Common myeloid progenitor, CD34-positive (primary cell): ENCODE measurements at regions of chr3 and their contacts with region 1.

Region 1: GRCh38 chr3:136690599-136690998 is 61.6 kb downstream of the STAG1 start:
- DNase-seq: peak in 2 of 3 donors; percentile 31 to 63
- H3K4me3 ChIP-seq: no peak overlapping the region
- H3K27ac ChIP-seq: no peak overlapping the region
- H3K4me1 ChIP-seq: peaks cover 0 to 3% (median 0%) of the 10 kb centered on the region in 4 experiments
- H3K27me3 ChIP-seq: no peaks in the 10 kb centered on the region

Region 2: GRCh38 chr3:136703429-136703828 is 12.8 kb after region 1 on chr3:
- CTCF ChIA-PET with region 1: interaction called, 15 read pairs
- POLR2A ChIA-PET with region 1: no interaction called
- DNase-seq: peak in 1 of 3 donors; percentile 50
- H3K4me3 ChIP-seq: no peak overlapping the region
- H3K27ac ChIP-seq: no peak overlapping the region
- H3K4me1 ChIP-seq: no peaks in the 10 kb centered on the region
- H3K27me3 ChIP-seq: no peaks in the 10 kb centered on the region

Region 3: GRCh38 chr3:136728918-136729317 is 38.3 kb after region 1 on chr3:
- CTCF ChIA-PET with region 1: no interaction called
- POLR2A ChIA-PET with region 1: no interaction called
- DNase-seq: no peak
- H3K4me3 ChIP-seq: peak overlapping the region in 1 of 7 experiments; percentile 23
- H3K27ac ChIP-seq: no peak overlapping the region
- H3K4me1 ChIP-seq: peaks cover 7 to 30% (median 20%) of the 10 kb centered on the region in 4 experiments
- H3K27me3 ChIP-seq: no peaks in the 10 kb centered on the region

Region 4: DNA sequence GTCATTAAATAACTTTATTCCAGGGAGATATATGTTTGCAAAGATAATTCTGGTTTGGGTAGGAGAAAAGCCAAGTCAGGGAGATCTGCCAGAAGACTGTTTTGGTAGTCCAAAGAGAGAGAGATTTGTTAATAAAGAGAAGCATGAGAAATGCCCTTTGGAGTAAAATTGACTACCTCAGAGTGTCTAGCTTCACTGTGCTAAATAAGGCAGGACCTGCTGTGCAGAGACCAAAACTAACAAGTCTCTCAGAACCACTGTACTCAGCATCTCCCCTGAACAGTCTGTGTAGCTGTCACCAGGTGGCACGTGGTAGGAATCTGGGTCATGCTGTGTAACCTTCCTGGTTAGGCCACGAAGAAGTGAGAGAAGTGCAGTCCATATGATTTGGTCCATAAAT is 96.8 kb after region 1 on chr3:
- CTCF ChIA-PET with region 1: no interaction called
- POLR2A ChIA-PET with region 1: no interaction called
- DNase-seq: peak in 2 of 3 donors; percentile 38 to 53
- H3K4me3 ChIP-seq: peak overlapping the region in 1 of 7 experiments; percentile 42
- H3K27ac ChIP-seq: peak overlapping the region; percentile 59 to 85
- H3K4me1 ChIP-seq: peaks cover 10 to 20% (median 15%) of the 10 kb centered on the region in 4 experiments
- H3K27me3 ChIP-seq: no peaks in the 10 kb centered on the region